Panc1 (cell line): ENCODE measurements at regions of chr4 and their contacts with region 1.

Region 1: DNA sequence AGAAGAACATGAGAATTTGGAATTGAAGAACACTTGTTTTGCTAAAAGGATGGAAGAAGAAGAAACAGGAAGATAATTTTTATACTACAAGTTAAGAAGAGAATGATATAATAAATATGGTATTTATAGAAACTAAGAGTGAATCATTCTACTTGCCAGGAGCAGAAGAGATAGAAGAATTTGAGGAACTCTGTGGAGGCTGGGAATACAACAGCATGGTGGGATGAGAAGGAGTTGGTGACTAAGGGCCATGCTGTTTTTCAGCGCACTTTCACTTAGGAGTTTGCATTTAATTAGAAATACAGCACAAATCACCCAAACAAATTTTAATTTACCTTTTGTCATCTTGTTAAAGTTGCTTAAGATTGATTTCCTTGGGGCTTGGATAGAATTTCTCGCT is 20.5 kb downstream of the HADH start:
- DNase-seq: no peak
- ATAC-seq: no peak
- H3K4me3 ChIP-seq: no peak overlapping the region
- H3K27ac ChIP-seq: no peak overlapping the region
- H3K4me1 ChIP-seq: no peaks in the 10 kb centered on the region
- H3K27me3 ChIP-seq: no peaks in the 10 kb centered on the region
- CTCF ChIP-seq: no peak

Region 2: DNA sequence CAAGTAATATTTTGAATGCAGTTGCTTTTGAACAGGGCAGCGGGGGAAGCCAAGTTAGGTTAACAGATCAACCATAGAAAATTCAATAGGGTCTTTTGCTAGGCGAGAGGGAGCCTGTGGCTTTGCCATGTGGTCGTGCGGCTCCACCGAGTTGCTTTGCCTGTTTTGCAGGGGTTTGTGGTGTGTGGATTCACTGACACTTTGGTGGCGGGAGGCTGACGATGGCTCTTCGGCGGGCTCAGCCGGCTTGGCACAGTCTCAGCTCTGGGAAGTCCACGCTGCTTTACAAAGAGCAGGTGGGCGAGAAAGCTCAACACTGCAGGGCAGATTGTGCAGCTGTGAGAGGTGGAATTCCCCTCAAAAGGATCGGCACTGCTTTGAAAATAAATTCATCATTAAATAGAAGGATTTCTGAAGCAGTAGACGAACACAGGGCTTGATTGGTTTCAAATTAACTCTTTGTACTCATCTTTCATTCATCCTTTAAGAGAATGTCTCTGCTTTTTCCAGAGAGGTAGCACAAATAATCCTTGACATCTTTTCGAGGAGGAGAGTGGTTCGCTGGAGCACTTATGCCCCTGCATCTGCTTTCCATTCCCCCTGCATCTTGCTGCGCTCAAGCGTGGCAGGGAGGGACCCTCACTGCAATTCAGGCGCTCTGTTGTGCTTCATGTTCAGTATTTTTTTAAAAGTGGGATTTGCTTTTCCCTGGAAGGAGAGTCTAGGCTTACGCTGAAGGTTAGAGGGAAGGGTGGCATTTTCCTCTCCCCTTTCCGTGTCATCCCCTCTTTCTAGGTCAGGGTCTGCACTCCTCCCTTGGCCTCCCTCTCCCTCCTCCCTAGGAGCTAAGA is 360.3 kb after region 1 on chr4:
- CTCF ChIA-PET with region 1: no interaction called
- POLR2A ChIA-PET with region 1: no interaction called
- in situ Hi-C with region 1: no loop called
- intact Hi-C with region 1: no loop called
- DNase-seq: no peak
- ATAC-seq: no peak
- H3K4me3 ChIP-seq: no peak overlapping the region
- H3K27ac ChIP-seq: no peak overlapping the region
- H3K4me1 ChIP-seq: no peaks in the 10 kb centered on the region
- H3K27me3 ChIP-seq: peaks cover 2% of the 10 kb centered on the region
- CTCF ChIP-seq: no peak

Region 3: DNA sequence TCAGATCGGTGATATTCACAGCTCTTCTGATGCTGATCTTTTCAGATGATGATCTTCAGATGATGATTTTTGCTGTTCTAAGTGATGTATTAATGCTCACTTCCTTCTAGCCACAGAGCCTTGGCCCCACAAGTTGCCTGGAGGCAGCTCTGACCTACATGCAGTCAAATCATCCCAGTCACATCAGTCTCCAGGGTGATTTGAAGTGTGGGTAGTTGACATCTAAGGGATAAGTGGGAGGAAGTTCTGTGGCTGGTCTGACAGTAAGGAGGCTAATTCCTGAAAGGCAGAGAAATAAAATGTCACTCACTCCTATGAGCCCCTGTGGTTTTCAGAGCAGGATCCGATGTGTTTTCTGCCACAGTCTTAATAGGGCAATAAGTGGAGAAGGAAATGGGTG is 530.4 kb after region 1 on chr4:
- CTCF ChIA-PET with region 1: no interaction called
- POLR2A ChIA-PET with region 1: interaction called, 11 read pairs
- in situ Hi-C with region 1: no loop called
- intact Hi-C with region 1: no loop called
- DNase-seq: no peak
- ATAC-seq: no peak
- H3K4me3 ChIP-seq: no peak overlapping the region
- H3K27ac ChIP-seq: no peak overlapping the region
- H3K4me1 ChIP-seq: no peaks in the 10 kb centered on the region
- H3K27me3 ChIP-seq: no peaks in the 10 kb centered on the region
- CTCF ChIP-seq: no peak